Naive thymus-derived CD4-positive, alpha-beta T cell (primary cell): ENCODE measurements at regions of chr3 and their contacts with region 1.

Region 1: DNA sequence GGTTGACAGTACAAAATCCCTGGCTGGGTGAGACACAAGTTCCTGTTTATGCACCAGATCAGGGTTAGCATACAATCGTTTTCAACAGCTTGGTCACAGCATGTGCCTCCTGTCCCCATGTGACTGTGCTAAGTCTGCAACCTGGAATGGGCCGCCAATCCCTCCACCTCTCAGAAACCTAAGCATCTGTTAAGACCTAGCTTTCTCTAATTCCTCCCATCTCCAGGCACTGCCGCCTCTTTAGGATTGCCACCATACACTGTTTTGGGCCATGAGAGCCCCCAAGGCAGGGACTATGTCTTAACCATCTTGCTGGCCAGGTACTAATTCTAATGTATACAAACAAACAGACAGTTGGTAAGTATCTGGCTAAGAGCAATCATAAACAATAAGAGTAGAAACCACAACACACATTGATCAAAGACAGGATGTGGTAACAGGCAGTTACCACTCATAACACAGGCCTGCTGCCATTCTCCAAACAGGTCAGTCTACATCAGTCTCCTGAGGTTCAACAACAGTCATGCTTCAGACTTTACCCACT is 25.6 kb downstream of the SEC22C start:
- DNase-seq: peak in 8 of 9 donors; percentile 33 to 80 (median 70)
- ATAC-seq: peak; percentile 88
- H3K4me3 ChIP-seq: peak overlapping the region; percentile 4
- H3K4me3 Mint-ChIP-seq: peak overlapping the region; percentile 29 to 85 (median 55)
- H3K27ac ChIP-seq: peak overlapping the region; percentile 50
- H3K27ac Mint-ChIP-seq: peak overlapping the region; percentile 90 to 100 (median 95)
- H3K4me1 ChIP-seq: peaks cover 23 to 28% of the 10 kb centered on the region in 2 donors
- H3K4me1 Mint-ChIP-seq: peaks cover 19 to 47% (median 40%) of the 10 kb centered on the region in 7 donors
- H3K27me3 ChIP-seq: no peaks in the 10 kb centered on the region
- H3K27me3 Mint-ChIP-seq: no peaks in the 10 kb centered on the region

Region 2: DNA sequence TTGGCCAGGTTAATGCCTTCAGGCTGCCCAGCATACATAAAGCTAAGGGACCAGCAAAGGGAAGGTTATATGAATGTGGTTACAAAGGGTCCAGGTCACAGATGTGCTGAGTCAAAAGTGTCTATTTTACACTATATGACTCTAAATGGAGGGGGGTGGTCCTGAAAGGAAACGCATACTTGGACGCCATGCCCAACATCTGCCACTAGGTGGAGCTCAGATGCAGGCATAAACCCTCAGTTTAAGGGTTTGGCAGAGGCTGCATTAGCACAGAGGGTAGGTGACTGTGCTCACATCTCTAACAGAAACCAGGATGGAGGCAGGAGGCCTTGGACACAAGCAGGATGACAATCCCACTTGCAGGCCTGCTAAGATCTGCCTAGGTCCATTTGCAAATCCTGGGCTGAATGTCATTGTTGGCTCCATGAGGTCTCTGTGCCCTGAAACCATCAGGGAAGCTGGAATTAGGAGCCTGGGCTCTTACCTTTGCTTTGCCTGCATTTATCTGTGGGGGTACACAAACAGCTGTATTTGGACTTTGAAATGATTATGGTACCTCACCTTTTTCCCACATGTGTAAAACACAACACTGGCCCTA is 1975.6 kb before region 1 on chr3:
- CTCF ChIA-PET with region 1: no interaction called
- POLR2A ChIA-PET with region 1: no interaction called
- intact Hi-C with region 1: loop called in 1 of 2 experiments (anchors 5 kb)
- DNase-seq: peak; percentile 18 to 61 (median 51)
- ATAC-seq: peak; percentile 72
- H3K4me3 ChIP-seq: no peak overlapping the region
- H3K4me3 Mint-ChIP-seq: no peak overlapping the region
- H3K27ac ChIP-seq: no peak overlapping the region
- H3K27ac Mint-ChIP-seq: peak overlapping the region in 1 of 9 donors; percentile 5
- H3K4me1 ChIP-seq: no peaks in the 10 kb centered on the region
- H3K4me1 Mint-ChIP-seq: no peaks in the 10 kb centered on the region
- H3K27me3 ChIP-seq: no peaks in the 10 kb centered on the region
- H3K27me3 Mint-ChIP-seq: peaks cover 0 to 9% (median 4%) of the 10 kb centered on the region in 5 donors

Region 3: DNA sequence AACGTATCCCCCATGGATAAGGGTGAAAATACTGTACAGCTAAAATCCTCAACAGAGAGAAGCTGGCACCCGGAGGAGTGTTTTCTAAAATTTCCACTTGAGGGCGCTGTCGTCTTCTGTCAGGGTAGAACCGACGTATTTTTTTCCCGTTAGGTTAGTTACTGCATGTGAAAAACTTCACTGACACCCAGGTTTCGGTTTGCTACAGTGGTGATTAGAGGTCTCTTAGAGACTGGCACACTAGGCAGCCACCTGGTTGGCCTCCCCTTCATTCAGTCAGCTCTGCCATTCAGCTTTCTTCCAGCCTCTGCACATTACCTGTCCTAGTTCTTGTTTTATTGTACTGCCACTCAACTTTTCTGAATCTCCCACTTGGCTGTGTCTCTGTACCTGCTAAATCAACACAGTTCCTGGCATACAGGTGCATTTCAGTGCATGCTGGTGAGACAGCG is 308.6 kb before region 1 on chr3:
- CTCF ChIA-PET with region 1: no interaction called
- POLR2A ChIA-PET with region 1: no interaction called
- intact Hi-C with region 1: loop called in 1 of 2 experiments (anchors 1 kb)
- DNase-seq: peak in 8 of 9 donors; percentile 39 to 81 (median 66)
- ATAC-seq: peak; percentile 69
- H3K4me3 ChIP-seq: no peak overlapping the region
- H3K4me3 Mint-ChIP-seq: peak overlapping the region in 7 of 10 donors; percentile 15 to 60 (median 30)
- H3K27ac ChIP-seq: no peak overlapping the region
- H3K27ac Mint-ChIP-seq: peak overlapping the region in 5 of 9 donors; percentile 32 to 78 (median 60)
- H3K4me1 ChIP-seq: no peaks in the 10 kb centered on the region
- H3K4me1 Mint-ChIP-seq: peaks cover 2 to 11% (median 8%) of the 10 kb centered on the region in 7 donors
- H3K27me3 ChIP-seq: no peaks in the 10 kb centered on the region
- H3K27me3 Mint-ChIP-seq: peaks cover 0 to 39% (median 0%) of the 10 kb centered on the region in 5 donors

Region 4: GRCh38 chr3:42476225-42477125 is 79.7 kb before region 1 on chr3:
- CTCF ChIA-PET with region 1: no interaction called
- POLR2A ChIA-PET with region 1: no interaction called
- intact Hi-C with region 1: no loop called
- DNase-seq: no peak
- ATAC-seq: peak; percentile 58
- H3K4me3 ChIP-seq: no peak overlapping the region
- H3K4me3 Mint-ChIP-seq: peak overlapping the region in 1 of 10 donors; percentile 27
- H3K27ac ChIP-seq: no peak overlapping the region
- H3K27ac Mint-ChIP-seq: peak overlapping the region in 2 of 9 donors; percentile 6 to 57
- H3K4me1 ChIP-seq: no peaks in the 10 kb centered on the region
- H3K4me1 Mint-ChIP-seq: peaks cover 0 to 5% (median 0%) of the 10 kb centered on the region in 7 donors
- H3K27me3 ChIP-seq: no peaks in the 10 kb centered on the region
- H3K27me3 Mint-ChIP-seq: peaks cover 13 to 33% (median 18%) of the 10 kb centered on the region in 5 donors

Region 5: GRCh38 chr3:42518800-42519567 is 37.2 kb before region 1 on chr3:
- CTCF ChIA-PET with region 1: interaction called, 7 read pairs
- POLR2A ChIA-PET with region 1: interaction called, 5 read pairs
- intact Hi-C with region 1: loop called in 1 of 2 experiments (anchors 1 kb)
- DNase-seq: peak in 3 of 9 donors; percentile 36 to 52 (median 49)
- ATAC-seq: peak; percentile 56
- H3K4me3 ChIP-seq: no peak overlapping the region
- H3K4me3 Mint-ChIP-seq: peak overlapping the region in 6 of 10 donors; percentile 28 to 73 (median 67)
- H3K27ac ChIP-seq: peak overlapping the region; percentile 51
- H3K27ac Mint-ChIP-seq: peak overlapping the region in 8 of 9 donors; percentile 73 to 95 (median 86)
- H3K4me1 ChIP-seq: peaks cover 0 to 23% of the 10 kb centered on the region in 2 donors
- H3K4me1 Mint-ChIP-seq: peaks cover 19 to 55% (median 39%) of the 10 kb centered on the region in 7 donors
- H3K27me3 ChIP-seq: no peaks in the 10 kb centered on the region
- H3K27me3 Mint-ChIP-seq: no peaks in the 10 kb centered on the region

Region 6: GRCh38 chr3:42581709-42582473 is 25.7 kb after region 1 on chr3 and contains the start of gene SEC22C:
- CTCF ChIA-PET with region 1: interaction called, 3 read pairs
- POLR2A ChIA-PET with region 1: interaction called, 5 read pairs
- intact Hi-C with region 1: loop called (anchors 1 to 2 kb)
- DNase-seq: peak; percentile 86 to 95 (median 94)
- ATAC-seq: peak; percentile 94
- H3K4me3 ChIP-seq: peak within 1 kb of the TSS; percentile 86
- H3K4me3 Mint-ChIP-seq: peak within 1 kb of the TSS; percentile 77 to 97 (median 94)
- H3K27ac ChIP-seq: peak within 1 kb of the TSS; percentile 92
- H3K27ac Mint-ChIP-seq: peak within 1 kb of the TSS; percentile 89 to 99 (median 96)
- H3K4me1 ChIP-seq: peaks cover 19 to 25% of the 10 kb centered on the region in 2 donors
- H3K4me1 Mint-ChIP-seq: peaks cover 31 to 60% (median 57%) of the 10 kb centered on the region in 7 donors
- H3K27me3 ChIP-seq: no peaks in the 10 kb centered on the region
- H3K27me3 Mint-ChIP-seq: no peaks in the 10 kb centered on the region
- total RNA-seq, gene SEC22C: 39.7 to 54.8 (median 51.3) TPM

Region 7: GRCh38 chr3:42613462-42613861 is 57.3 kb after region 1 on chr3:
- CTCF ChIA-PET with region 1: no interaction called
- POLR2A ChIA-PET with region 1: no interaction called
- intact Hi-C with region 1: no loop called
- DNase-seq: peak in 1 of 9 donors; percentile 17
- ATAC-seq: peak; percentile 63
- H3K4me3 ChIP-seq: no peak overlapping the region
- H3K4me3 Mint-ChIP-seq: peak overlapping the region in 2 of 10 donors; percentile 1 to 38
- H3K27ac ChIP-seq: no peak overlapping the region
- H3K27ac Mint-ChIP-seq: peak overlapping the region in 5 of 9 donors; percentile 1 to 49 (median 4)
- H3K4me1 ChIP-seq: peaks cover 14 to 15% of the 10 kb centered on the region in 2 donors
- H3K4me1 Mint-ChIP-seq: peaks cover 40 to 84% (median 64%) of the 10 kb centered on the region in 7 donors
- H3K27me3 ChIP-seq: no peaks in the 10 kb centered on the region
- H3K27me3 Mint-ChIP-seq: no peaks in the 10 kb centered on the region

Region 8: DNA sequence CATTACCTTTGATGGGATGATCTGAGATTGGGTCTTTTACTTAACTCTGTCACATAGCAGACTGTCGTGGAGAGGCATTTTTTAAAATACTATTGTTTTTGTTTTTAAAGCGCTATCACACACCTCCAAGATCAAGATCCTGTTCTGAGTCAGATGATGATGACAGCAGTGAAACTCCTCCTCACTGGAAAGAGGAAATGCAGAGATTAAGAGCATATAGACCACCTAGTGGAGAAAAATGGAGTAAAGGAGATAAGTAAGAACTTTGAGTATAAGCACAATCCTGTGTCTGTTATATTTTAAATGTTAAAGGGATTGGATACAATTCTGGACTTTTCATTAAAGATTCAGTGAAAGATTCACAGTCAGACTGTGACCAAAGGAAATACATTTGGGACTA is 79.0 kb after region 1 on chr3:
- CTCF ChIA-PET with region 1: no interaction called
- POLR2A ChIA-PET with region 1: no interaction called
- intact Hi-C with region 1: loop called in 1 of 2 experiments (anchors 1 kb)
- DNase-seq: peak in 2 of 9 donors; percentile 23 to 28
- ATAC-seq: peak; percentile 63
- H3K4me3 ChIP-seq: no peak overlapping the region
- H3K4me3 Mint-ChIP-seq: no peak overlapping the region
- H3K27ac ChIP-seq: no peak overlapping the region
- H3K27ac Mint-ChIP-seq: peak overlapping the region in 5 of 9 donors; percentile 9 to 63 (median 34)
- H3K4me1 ChIP-seq: peaks cover 21 to 23% of the 10 kb centered on the region in 2 donors
- H3K4me1 Mint-ChIP-seq: peaks cover 0 to 16% (median 4%) of the 10 kb centered on the region in 7 donors
- H3K27me3 ChIP-seq: no peaks in the 10 kb centered on the region
- H3K27me3 Mint-ChIP-seq: no peaks in the 10 kb centered on the region